ENCODE measurements at regions of chr22 and their contacts with region 1.

Region 1: DNA sequence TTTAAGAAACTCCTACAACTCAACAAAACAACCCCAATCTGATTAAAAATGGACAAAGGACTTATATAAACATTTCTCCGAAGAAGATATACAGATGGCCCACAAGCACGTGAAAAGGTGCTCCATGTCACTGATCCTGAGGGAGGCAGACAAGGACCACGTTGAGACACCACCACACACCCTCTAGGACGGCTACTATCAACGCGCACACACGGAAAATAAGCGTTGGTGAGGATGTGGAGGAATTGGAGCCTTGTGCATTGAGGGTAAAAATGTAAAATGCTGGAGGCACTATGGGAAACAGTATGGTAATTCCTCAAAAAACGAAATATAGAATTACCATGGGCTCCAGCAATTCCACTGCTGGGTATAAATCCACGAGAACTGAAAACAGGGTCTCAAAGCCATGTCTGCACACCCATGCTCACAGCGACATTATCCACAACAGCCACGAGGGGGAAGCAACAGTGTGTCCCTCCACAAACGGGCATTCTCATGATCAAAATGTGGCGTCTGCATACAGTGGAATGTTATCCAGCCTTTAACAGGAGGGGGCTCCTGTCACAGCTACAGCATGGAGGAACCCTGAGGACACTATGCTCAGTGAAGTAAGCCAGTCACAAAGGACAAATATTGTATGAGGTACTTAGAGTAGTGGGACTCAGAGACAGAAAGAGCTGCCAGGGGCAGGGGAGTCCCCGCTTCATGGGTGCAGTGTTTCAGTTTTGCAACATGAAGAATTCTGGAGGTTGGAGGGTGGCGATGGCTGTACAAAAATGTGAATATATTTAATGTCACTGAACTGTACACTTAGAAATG is 22.5 kb downstream of the YPEL1 start:
- DNase-seq: peak; percentile 76 to 78
- H3K4me3 ChIP-seq: 0 out of 2 replicates have a peak overlapping the region, but pooled peaks have one; percentile 4
- H3K4me3 Mint-ChIP-seq: peak overlapping the region; percentile 49
- H3K27ac Mint-ChIP-seq: no peak overlapping the region
- H3K4me1 ChIP-seq: peaks cover 12% of the 10 kb centered on the region
- H3K4me1 Mint-ChIP-seq: peaks cover 18% of the 10 kb centered on the region
- H3K27me3 ChIP-seq: no peaks in the 10 kb centered on the region
- H3K27me3 Mint-ChIP-seq: no peaks in the 10 kb centered on the region
- CTCF ChIP-seq: peak; percentile 66 to 72

Region 2: DNA sequence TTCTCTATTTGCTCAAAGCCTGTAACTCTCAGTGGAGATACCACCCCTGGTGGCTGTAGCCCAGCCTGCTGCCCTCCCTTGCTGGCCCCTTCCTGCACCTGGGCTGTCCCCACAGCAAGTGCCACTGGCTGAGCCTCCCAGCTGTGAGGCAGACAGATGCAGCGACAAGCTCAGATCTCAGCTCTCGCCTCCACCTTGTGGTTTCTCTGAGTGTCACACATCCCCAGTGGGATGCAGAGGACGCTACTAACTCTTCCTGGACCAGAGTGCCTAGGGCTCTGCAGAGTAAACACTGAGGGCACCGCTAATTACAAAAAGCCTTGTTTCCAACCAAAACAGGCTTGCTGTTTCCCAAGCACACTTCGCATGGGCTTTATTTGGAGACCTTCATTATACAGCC is 13.5 kb after region 1 on chr22:
- CTCF ChIA-PET with region 1: interaction called, 15 read pairs
- POLR2A ChIA-PET with region 1: no interaction called
- intact Hi-C with region 1: loop called (anchors 1 kb)
- DNase-seq: peak; percentile 63 to 69
- H3K4me3 ChIP-seq: no peak overlapping the region
- H3K4me3 Mint-ChIP-seq: no peak overlapping the region
- H3K27ac Mint-ChIP-seq: no peak overlapping the region
- H3K4me1 ChIP-seq: no peaks in the 10 kb centered on the region
- H3K4me1 Mint-ChIP-seq: peaks cover 4% of the 10 kb centered on the region
- H3K27me3 ChIP-seq: no peaks in the 10 kb centered on the region
- H3K27me3 Mint-ChIP-seq: no peaks in the 10 kb centered on the region
- CTCF ChIP-seq: peak; percentile 55 to 56

Region 3: DNA sequence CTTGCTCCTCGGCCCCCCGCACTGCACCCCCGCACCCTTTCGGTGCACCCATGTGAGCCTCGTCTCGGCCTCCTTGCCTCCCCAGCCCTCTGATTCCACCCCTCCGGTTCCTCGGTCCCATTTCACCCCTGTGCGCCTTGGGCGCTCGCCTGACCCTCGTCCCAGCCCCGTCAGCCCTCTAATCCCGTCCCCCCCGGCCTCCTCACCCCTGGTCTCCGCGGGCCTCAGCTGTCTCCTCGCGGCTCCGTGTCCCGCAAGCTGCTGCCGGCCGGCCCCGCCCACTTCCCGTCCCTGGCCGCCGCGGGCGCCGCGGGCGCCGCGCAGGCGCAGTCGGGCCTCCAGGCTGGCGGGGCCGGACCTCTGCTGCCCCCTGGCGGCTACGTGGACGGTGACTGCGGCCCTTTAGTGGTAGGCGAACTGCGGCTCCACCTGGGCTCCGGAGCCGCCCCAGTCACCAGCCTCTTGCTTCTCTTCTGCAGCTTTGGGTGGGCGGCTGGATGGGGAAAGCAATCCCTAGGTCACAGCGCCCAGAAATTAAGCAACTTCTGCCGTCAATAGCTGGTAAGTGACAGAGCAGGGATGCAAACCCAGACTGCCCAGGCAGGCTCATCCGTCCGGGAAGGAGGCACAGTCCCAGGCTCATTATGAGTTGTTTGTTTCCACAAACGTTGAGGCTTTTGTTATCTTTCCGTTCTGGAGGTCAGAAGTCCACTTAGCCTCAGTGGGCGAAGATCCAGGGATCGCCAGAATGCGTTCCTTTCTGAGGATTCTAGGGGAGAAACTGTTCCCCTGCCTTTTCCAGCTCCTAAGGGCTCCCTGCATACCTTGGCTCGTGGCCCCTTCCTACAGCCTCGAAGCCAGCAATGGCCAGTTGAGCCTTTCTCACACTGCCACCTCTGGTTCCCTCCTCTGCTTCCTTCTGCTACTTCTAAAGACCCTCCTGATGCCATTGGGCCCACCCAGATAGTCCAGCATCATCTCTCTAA is 239.8 kb after region 1 on chr22 and contains the start of gene PPM1F:
- CTCF ChIA-PET with region 1: interaction called, 3 read pairs
- POLR2A ChIA-PET with region 1: no interaction called
- intact Hi-C with region 1: loop called (anchors 2 kb)
- DNase-seq: peak; percentile 72 to 92
- H3K4me3 ChIP-seq: peak within 1 kb of the TSS; percentile 97
- H3K4me3 Mint-ChIP-seq: peak within 1 kb of the TSS; percentile 79
- H3K27ac Mint-ChIP-seq: peak within 1 kb of the TSS; percentile 39
- H3K4me1 ChIP-seq: peaks cover 5% of the 10 kb centered on the region; the same call in 1 of the 2 replicates
- H3K4me1 Mint-ChIP-seq: peaks cover 2% of the 10 kb centered on the region
- H3K27me3 ChIP-seq: no peaks in the 10 kb centered on the region
- H3K27me3 Mint-ChIP-seq: no peaks in the 10 kb centered on the region
- CTCF ChIP-seq: peak; percentile 76 to 87
- total RNA-seq, gene PPM1F: 18.9 and 25.8 TPM in 2 replicates